GM12878 (cell line): ENCODE measurements at regions of chr5 and their contacts with region 1.

Region 1: GRCh38 chr5:75734913-75735789 is 17.9 kb upstream of the POC5 start:
- DNase-seq: peak; percentile 5
- ATAC-seq: peak; percentile 81
- H3K4me3 ChIP-seq: no peak overlapping the region
- H3K27ac ChIP-seq: no peak overlapping the region
- H3K4me1 ChIP-seq: no peaks in the 10 kb centered on the region
- H3K27me3 ChIP-seq: no peaks in the 10 kb centered on the region
- CTCF ChIP-seq: peak; percentile 61 to 70 (median 67); a peak in 5 of 6 replicates
- EP300 ChIP-seq: no peak
- POLR2A ChIP-seq: no peak
- RAD21 ChIP-seq: peak; percentile 93

Region 2: GRCh38 chr5:75668977-75669689 is 66.0 kb before region 1 on chr5:
- CTCF ChIA-PET with region 1: no interaction called
- POLR2A ChIA-PET with region 1: no interaction called
- RAD21 ChIA-PET with region 1: no interaction called
- SMC1A ChIA-PET with region 1: no interaction called
- in situ Hi-C with region 1: no loop called
- intact Hi-C with region 1: no loop called
- DNase-seq: peak; percentile 78
- ATAC-seq: peak; percentile 97
- H3K4me3 ChIP-seq: peak overlapping the region; percentile 49
- H3K27ac ChIP-seq: peak overlapping the region; percentile 63
- H3K4me1 ChIP-seq: peaks cover 10% of the 10 kb centered on the region
- H3K27me3 ChIP-seq: no peaks in the 10 kb centered on the region
- CTCF ChIP-seq: no peak
- EP300 ChIP-seq: 0 out of 4 replicates have a peak, but pooled peaks of 1 of the 2 experiments have one; percentile 14
- POLR2A ChIP-seq: peak; percentile 78
- RAD21 ChIP-seq: peak; percentile 34; the same call in 1 of the 2 replicates

Region 3: DNA sequence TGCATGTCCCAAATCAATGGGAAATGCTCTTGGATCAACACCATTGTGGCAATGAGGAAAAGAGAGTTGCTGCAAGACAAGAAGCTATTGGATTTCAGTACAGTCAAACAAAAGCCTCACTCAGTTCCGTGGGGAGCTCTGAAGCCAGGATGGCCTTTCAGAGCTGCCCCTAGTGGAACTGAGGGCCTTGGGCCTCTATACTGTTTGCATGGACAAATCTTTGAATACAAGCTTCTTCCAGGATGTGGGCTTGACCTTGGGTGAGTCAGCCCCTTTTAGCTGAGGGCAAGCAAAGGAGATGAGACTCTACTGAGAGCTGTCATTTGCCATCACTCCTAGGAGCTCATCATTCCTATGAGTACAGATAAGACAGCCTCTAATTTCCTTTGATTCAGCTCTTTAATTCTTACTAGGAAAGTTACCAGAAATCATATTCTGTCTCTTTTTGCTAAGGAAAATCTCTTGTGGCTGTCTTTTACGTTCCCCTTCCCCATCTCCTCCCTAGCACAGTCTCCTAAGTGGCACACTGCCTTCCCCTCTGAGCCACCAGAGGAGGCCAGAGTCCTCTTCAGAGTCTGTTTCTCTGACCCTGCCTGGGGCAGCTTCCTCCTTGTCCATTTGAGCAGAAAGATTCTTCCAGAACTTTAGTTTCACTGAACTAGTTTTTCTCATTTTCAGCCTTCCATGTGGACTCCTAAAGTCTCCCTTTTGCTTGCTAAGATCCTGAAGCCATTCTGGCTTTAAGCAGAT is 150.9 kb after region 1 on chr5:
- CTCF ChIA-PET with region 1: interaction called, 9 read pairs
- POLR2A ChIA-PET with region 1: no interaction called
- RAD21 ChIA-PET with region 1: interaction called, 6 read pairs
- SMC1A ChIA-PET with region 1: interaction called, 12 read pairs
- in situ Hi-C with region 1: no loop called
- intact Hi-C with region 1: loop called (anchors 10 kb)
- DNase-seq: no peak
- ATAC-seq: peak; percentile 73
- H3K4me3 ChIP-seq: no peak overlapping the region
- H3K27ac ChIP-seq: no peak overlapping the region
- H3K4me1 ChIP-seq: no peaks in the 10 kb centered on the region
- H3K27me3 ChIP-seq: no peaks in the 10 kb centered on the region
- CTCF ChIP-seq: peak; percentile 48 to 66 (median 62)
- EP300 ChIP-seq: no peak
- POLR2A ChIP-seq: no peak
- RAD21 ChIP-seq: peak; percentile 83

Region 4: GRCh38 chr5:76074487-76075065 is 339.4 kb after region 1 on chr5:
- CTCF ChIA-PET with region 1: no interaction called
- POLR2A ChIA-PET with region 1: no interaction called
- RAD21 ChIA-PET with region 1: interaction called, 3 read pairs
- SMC1A ChIA-PET with region 1: no interaction called
- in situ Hi-C with region 1: no loop called
- intact Hi-C with region 1: loop called (anchors 10 kb)
- DNase-seq: no peak
- ATAC-seq: peak; percentile 86
- H3K4me3 ChIP-seq: no peak overlapping the region
- H3K27ac ChIP-seq: no peak overlapping the region
- H3K4me1 ChIP-seq: no peaks in the 10 kb centered on the region
- H3K27me3 ChIP-seq: peaks cover 0 to 4% of the 10 kb centered on the region in 2 experiments; a peak in 1 of 4 replicates
- CTCF ChIP-seq: peak; percentile 69 to 88 (median 77)
- EP300 ChIP-seq: no peak
- POLR2A ChIP-seq: no peak
- RAD21 ChIP-seq: peak; percentile 96